Activated naive CD4-positive, alpha-beta T cell treated with anti-CD3 and anti-CD28 coated beads for 36 hours (primary cell): ENCODE measurements at regions of chrX and their contacts with region 1.

Region 1: DNA sequence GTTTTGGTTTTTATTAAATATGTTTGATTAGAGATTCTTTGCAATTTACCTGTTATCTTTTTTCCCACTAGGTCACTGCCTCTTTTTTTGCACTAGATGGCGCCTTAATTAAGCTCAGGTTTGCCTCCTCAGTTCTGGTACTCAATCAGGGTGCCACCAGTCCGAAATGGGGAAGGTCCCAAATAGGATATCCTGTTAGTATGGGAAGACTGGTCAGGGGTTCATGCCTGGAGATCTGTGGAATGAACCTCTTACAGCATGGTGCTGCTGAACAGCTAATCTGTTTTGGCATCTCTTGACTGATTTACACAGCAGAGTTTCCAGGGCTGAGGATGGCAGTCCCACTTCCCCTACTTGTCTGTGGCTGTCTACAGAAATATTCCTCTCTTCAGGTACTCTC is 24.2 kb upstream of the VSIG1 start:
- DNase-seq: no peak
- H3K4me3 Mint-ChIP-seq: peak overlapping the region; percentile 36
- H3K27ac Mint-ChIP-seq: peak overlapping the region; percentile 72
- H3K4me1 Mint-ChIP-seq: peaks cover 58% of the 10 kb centered on the region
- H3K27me3 Mint-ChIP-seq: no peaks in the 10 kb centered on the region

Region 2: DNA sequence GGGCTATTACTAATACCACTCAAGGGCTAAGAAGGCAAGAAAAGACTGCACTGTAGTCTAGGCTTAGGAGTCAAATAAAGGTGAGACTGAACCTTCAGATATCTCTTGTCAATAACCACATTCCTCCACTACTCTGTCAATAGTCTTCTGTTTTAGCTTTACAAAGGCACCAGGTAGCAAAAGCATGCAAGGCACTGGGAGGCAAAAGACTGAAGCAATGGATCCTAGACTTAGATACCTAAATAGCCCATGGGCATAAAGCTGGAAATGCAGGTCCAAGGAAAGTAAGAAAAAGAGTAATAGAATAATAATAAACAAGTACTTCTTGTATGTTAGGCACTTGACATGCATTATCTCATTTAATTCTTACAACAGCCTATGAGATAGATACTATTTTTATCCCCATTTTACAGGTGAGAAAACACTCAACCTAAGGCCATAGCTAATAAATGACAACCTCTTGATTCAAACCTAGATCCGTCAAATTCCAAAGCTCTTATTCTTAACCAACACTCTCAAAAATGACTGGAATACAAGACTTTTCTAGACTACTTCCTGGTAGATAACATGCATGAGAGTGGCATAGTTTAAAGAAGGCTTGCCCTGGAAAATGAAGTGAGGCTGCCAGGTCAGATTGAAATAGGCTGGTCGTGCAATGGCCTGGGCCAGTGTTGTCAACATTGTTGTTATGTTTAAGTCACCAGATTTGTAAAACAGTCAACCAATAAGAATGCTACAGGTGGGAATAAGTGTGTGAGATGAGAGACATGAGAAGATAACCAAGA is 727.7 kb before region 1 on chrX:
- CTCF ChIA-PET with region 1: no interaction called
- intact Hi-C with region 1: no loop called
- DNase-seq: no peak
- H3K4me3 Mint-ChIP-seq: no peak overlapping the region
- H3K27ac Mint-ChIP-seq: no peak overlapping the region
- H3K4me1 Mint-ChIP-seq: no peaks in the 10 kb centered on the region
- H3K27me3 Mint-ChIP-seq: no peaks in the 10 kb centered on the region

Region 3: DNA sequence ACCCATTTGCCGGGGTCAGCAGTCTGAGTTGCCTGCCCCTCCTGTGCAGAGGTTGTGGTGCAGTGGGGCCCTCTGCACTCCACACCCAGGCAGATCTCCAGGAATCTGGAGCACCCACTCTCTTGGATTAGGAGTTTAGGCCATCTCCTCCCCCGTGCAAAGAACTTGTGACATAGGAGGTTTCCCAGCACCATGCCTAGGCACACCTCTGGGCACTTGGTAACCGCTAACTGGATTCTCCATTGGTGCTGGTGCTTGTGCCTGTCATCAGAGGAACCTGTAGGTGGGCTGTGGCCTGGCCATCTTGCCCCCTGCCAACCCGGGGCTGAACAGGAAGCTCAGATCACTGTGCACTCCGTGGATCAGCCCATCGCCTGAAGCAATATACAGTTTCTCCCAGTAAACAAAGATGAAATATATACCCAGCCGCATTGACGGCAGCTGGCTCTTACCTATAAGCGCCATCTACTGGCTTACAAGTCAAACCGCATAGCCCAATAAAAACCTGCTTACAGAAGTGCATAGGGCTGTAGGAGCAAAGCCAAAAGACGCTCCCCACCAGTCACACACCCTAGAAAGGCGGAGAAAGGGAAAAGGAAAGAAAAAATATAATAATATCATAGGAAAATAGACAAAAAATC is 19.3 kb before region 1 on chrX:
- CTCF ChIA-PET with region 1: interaction called, 11 read pairs
- intact Hi-C with region 1: no loop called
- DNase-seq: peak; percentile 37
- H3K4me3 Mint-ChIP-seq: no peak overlapping the region
- H3K27ac Mint-ChIP-seq: peak overlapping the region; percentile 30
- H3K4me1 Mint-ChIP-seq: peaks cover 5% of the 10 kb centered on the region
- H3K27me3 Mint-ChIP-seq: no peaks in the 10 kb centered on the region

Region 4: DNA sequence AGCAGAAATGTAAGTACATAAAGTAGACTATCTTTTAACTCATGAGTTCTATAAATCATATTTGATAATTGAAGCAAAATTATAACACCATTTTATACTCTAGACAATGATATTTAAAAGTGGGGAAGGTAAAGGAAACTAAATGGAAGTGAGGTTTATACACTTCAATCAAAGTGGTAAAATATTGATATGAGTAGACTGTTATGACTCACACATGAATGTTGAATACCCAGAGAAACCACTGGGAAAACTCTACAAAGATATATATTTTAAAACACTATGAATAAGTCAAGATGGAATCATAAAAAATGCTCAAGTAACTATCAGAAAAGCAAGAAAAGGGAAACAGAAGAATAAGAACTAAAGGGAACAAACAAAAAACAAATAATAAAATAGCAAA is 32.6 kb after region 1 on chrX:
- CTCF ChIA-PET with region 1: interaction called, 3 read pairs
- intact Hi-C with region 1: loop called (anchors 1 kb)
- DNase-seq: no peak
- H3K4me3 Mint-ChIP-seq: no peak overlapping the region
- H3K27ac Mint-ChIP-seq: no peak overlapping the region
- H3K4me1 Mint-ChIP-seq: peaks cover 7% of the 10 kb centered on the region
- H3K27me3 Mint-ChIP-seq: no peaks in the 10 kb centered on the region

Region 5: GRCh38 chrX:108091266-108091877 is 70.7 kb after region 1 on chrX and contains the starts of genes ATG4A and PSMD10:
- CTCF ChIA-PET with region 1: no interaction called
- intact Hi-C with region 1: loop called (anchors 1 kb)
- DNase-seq: peak; percentile 94
- H3K4me3 Mint-ChIP-seq: no peak within 1 kb of the TSS
- H3K27ac Mint-ChIP-seq: no peak within 1 kb of the TSS
- H3K4me1 Mint-ChIP-seq: peaks cover 19% of the 10 kb centered on the region
- H3K27me3 Mint-ChIP-seq: no peaks in the 10 kb centered on the region
- total RNA-seq, gene ATG4A: 8.2 to 8.6 TPM
- total RNA-seq, gene PSMD10: 54.6 to 58.8 TPM